ENCODE measurements at regions of chr14 and their contacts with region 1.

Region 1: GRCh38 chr14:24058260-24058950 is 6.6 kb downstream of the CARMIL3 start:
- DNase-seq: no peak
- H3K4me3 ChIP-seq: no peak overlapping the region
- H3K27me3 ChIP-seq: peaks cover 10% of the 10 kb centered on the region
- CTCF ChIP-seq: peak; percentile 86

Region 2: GRCh38 chr14:24070285-24071143 is 12.1 kb after region 1 on chr14:
- CTCF ChIA-PET with region 1: interaction called, 33 read pairs
- POLR2A ChIA-PET with region 1: no interaction called
- DNase-seq: no peak
- H3K4me3 ChIP-seq: no peak overlapping the region
- H3K27me3 ChIP-seq: peaks cover 19% of the 10 kb centered on the region
- CTCF ChIP-seq: no peak

Region 3: GRCh38 chr14:24080888-24081738 is 22.7 kb after region 1 on chr14:
- CTCF ChIA-PET with region 1: interaction called, 18 read pairs
- POLR2A ChIA-PET with region 1: no interaction called
- DNase-seq: no peak
- H3K4me3 ChIP-seq: peak overlapping the region; percentile 45
- H3K27me3 ChIP-seq: peaks cover 27% of the 10 kb centered on the region
- CTCF ChIP-seq: no peak

Region 4: DNA sequence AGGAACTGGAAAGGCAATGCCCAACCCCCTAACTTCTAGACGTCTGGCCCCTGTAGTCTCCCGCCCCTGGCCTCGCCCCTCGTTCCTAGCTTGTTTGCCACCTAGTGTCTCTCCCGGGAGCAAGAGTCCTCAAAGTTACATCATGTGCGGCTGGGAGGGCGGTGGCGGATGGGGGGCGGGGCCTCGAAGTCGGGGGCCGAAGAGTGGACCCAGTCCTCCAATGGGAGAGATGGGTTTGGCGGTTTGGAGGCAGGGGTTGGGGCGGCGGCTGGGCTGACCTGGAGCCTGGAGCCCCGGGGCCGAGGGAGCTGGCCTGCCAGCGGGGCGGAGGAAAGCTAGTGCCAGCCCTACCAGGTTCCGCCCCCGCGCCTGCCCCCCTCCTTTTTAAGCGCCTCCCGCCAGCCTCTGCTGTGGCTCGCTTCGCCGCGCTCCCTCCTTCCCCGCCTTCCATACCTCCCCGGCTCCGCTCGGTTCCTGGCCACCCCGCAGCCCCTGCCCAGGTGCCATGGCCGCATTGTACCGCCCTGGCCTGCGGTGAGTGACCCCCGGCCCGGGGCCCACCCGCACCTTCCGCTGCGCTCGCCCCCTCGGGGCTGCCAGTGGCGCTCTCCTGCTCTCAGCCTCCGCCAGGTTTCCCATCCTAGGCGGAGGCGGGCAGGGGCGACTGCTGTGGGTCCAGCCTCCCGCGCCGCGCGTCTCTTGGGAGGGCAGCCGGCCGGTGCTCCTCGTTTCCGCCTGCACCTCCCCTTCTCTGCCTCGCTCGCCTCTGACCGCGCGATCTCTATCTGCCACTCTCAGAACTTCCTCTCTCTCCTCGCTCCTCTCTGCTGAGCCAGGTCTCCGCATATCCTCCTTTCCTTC is 35.7 kb after region 1 on chr14 and contains the start of gene PCK2:
- CTCF ChIA-PET with region 1: interaction called, 200 read pairs
- POLR2A ChIA-PET with region 1: no interaction called
- DNase-seq: peak; percentile 84
- H3K4me3 ChIP-seq: peak within 1 kb of the TSS; percentile 82
- H3K27me3 ChIP-seq: no peaks in the 10 kb centered on the region
- CTCF ChIP-seq: peak; percentile 21; the same call in 1 of the 2 replicates
- polyA plus RNA-seq, gene PCK2: 141 and 227 TPM in 2 replicates

Region 5: GRCh38 chr14:24114536-24115450 is 56.4 kb after region 1 on chr14 and contains the starts of genes DCAF11 and NRL:
- CTCF ChIA-PET with region 1: interaction called, 66 read pairs
- POLR2A ChIA-PET with region 1: no interaction called
- DNase-seq: peak; percentile 99
- H3K4me3 ChIP-seq: peak within 1 kb of the TSS; percentile 70
- H3K27me3 ChIP-seq: no peaks in the 10 kb centered on the region
- CTCF ChIP-seq: no peak
- polyA plus RNA-seq, gene DCAF11: 41.5 and 50.0 TPM in 2 replicates
- polyA plus RNA-seq, gene NRL: 0.59 and 0.91 TPM in 2 replicates

Region 6: GRCh38 chr14:24299255-24300195 is 241.1 kb after region 1 on chr14 and contains the starts of genes DHRS1 and NOP9:
- CTCF ChIA-PET with region 1: interaction called, 11 read pairs
- POLR2A ChIA-PET with region 1: no interaction called
- DNase-seq: peak; percentile 32
- H3K4me3 ChIP-seq: peak within 1 kb of the TSS; percentile 72
- H3K27me3 ChIP-seq: no peaks in the 10 kb centered on the region
- CTCF ChIP-seq: no peak
- polyA plus RNA-seq, gene DHRS1: 40.5 and 57.1 TPM in 2 replicates
- polyA plus RNA-seq, gene NOP9: 13.9 and 16.3 TPM in 2 replicates